ENCODE measurements at regions of chr3 and their contacts with region 1.

Region 1: DNA sequence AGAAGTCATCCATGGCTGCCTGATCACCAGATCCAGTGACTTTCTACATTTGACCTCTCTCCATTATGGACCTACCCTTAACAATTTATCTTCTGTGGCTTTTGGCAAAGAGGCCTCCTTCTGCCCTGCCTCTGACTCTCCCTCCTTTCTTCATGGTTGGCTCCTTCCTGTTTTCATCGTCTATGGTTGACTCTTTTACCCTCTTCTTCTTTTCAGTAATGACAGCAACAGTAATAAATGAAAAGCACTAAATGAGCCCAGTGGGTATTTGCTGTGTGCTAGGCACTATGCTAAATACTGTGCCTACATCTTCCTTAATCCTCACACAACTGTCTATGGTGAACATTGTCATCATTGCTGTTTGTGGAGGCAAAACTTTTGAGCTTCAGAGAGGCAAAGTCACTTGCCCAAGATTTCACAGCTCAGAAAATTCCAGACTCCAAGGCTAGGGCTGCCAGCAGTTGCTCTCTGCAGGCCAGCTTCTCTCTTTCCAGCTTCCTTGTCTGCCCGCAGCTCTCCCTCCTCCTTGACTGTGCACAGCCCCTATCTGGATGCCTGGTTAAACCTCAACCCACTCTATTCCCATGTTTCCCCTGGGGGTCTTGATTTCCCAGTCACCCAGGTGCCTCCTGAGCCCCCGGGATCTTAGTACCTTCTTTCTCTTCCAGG is 24.6 kb downstream of the ITPR1 start:
- DNase-seq: no peak
- ATAC-seq: no peak
- H3K4me3 Mint-ChIP-seq: no peak overlapping the region
- H3K27ac Mint-ChIP-seq: peak overlapping the region; percentile 84
- H3K4me1 Mint-ChIP-seq: peaks cover 29% of the 10 kb centered on the region
- H3K27me3 Mint-ChIP-seq: no peaks in the 10 kb centered on the region

Region 2: DNA sequence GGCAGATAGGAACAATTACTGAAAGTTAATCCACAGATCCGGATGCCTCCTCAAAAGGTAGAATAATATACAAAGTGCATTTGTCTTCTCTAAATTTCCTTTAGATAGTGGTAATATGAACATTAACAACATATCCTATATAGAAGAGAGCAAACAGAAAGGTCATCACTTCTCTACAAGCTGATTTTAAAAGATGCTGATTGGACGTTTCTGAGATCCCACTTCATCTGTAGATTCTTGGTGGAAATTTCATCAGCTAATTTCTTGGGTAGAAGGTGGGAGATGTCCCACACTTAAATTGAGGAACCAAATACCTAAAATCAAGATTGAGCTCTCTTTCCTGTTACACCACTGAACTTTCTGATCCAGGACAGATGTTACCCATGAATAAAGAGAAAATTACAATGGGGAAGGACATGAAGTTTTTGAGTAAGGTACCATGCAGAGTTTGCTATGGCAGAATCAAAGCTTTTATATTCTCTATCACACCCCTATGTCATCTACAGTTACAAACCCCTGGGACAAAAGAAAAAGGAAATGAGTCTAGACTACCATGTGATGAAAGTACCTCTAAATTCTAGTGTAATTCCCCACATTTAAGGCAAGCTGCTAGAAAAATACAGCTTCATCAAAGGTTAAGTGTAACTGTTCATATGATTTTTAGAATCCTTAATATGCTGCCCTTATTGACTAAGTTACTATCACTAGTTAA is 403.8 kb before region 1 on chr3:
- CTCF ChIA-PET with region 1: no interaction called
- POLR2A ChIA-PET with region 1: no interaction called
- DNase-seq: no peak
- ATAC-seq: no peak
- H3K4me3 Mint-ChIP-seq: no peak overlapping the region
- H3K27ac Mint-ChIP-seq: no peak overlapping the region
- H3K4me1 Mint-ChIP-seq: no peaks in the 10 kb centered on the region
- H3K27me3 Mint-ChIP-seq: no peaks in the 10 kb centered on the region

Region 3: DNA sequence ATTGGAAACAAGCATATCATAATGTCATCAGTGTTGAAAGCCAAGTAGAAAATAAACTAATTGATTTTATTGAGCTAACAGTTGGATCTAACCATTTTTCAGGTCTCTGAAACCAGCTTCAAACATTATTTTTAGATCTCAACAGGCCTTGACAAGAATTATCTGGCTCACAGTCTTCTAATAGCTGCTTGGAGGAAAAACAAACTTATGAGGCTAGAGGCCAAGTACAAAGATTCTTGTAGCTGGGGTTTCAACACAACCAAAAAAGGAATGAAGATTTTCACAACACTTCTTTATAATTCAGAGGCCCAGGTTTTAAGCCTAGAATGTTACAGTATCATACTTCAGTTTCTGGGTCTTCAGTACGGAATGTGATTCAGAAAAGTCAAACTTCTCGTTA is 210.9 kb before region 1 on chr3:
- CTCF ChIA-PET with region 1: no interaction called
- POLR2A ChIA-PET with region 1: no interaction called
- DNase-seq: no peak
- ATAC-seq: no peak
- H3K4me3 Mint-ChIP-seq: no peak overlapping the region
- H3K27ac Mint-ChIP-seq: no peak overlapping the region
- H3K4me1 Mint-ChIP-seq: peaks cover 17% of the 10 kb centered on the region
- H3K27me3 Mint-ChIP-seq: no peaks in the 10 kb centered on the region

Region 4: DNA sequence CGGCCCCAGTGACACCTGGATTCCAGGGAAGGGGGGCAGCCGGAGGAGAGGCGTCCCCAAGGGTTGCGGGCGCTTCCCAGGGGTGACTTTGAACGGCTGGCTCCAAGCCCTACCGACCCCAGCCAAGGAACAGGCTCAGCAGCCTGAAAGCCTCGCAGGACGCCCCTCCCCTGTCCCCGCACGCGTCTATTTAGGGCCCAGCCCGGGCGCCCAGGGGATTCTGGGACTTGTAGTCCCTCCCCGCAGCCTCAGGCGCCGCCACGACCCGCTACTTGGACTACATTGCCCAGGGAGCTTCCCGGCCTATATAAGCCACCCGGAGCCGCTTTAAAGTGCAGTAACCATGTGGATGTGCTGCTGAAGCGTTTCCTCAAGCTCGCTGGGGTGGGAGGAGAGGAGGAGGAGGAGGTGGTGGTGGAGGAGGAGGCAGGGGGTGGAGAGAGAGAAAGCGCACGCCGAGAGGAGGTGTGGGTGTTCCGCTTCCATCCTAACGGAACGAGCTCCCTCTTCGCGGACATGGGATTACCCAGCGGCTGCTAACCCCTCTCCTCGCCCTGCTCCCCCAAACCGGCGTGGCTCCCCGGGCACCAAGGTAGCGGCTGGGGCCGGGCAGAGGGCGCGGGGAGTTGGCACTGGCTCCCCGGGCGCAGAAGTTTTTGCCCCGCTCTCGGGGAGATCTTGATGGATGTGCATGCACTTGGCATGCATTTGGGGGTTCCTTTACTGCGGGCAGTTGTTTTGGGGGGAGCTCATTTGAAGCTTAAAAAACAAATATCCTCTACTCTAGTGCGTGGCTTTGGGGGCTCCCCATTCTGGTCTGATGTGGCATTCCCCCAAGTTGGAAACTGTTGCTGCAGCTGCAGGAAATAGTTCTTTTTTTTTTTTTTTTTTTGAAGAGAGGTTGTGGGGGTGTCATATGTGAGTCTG is 24.5 kb before region 1 on chr3 and contains the start of gene ITPR1:
- CTCF ChIA-PET with region 1: interaction called, 56 read pairs
- POLR2A ChIA-PET with region 1: interaction called, 32 read pairs
- DNase-seq: peak; percentile 99
- ATAC-seq: peak; percentile 91
- H3K4me3 Mint-ChIP-seq: peak within 1 kb of the TSS; percentile 94
- H3K27ac Mint-ChIP-seq: peak within 1 kb of the TSS; percentile 89
- H3K4me1 Mint-ChIP-seq: peaks cover 39% of the 10 kb centered on the region
- H3K27me3 Mint-ChIP-seq: peaks cover 20% of the 10 kb centered on the region
- total RNA-seq, gene ITPR1: 53.8 to 57.3 TPM

Region 5: GRCh38 chr3:4504340-4505261 is 13.2 kb before region 1 on chr3:
- CTCF ChIA-PET with region 1: interaction called, 51 read pairs
- POLR2A ChIA-PET with region 1: interaction called, 8 read pairs
- DNase-seq: peak; percentile 50
- ATAC-seq: peak; percentile 83
- H3K4me3 Mint-ChIP-seq: peak overlapping the region; percentile 80
- H3K27ac Mint-ChIP-seq: peak overlapping the region; percentile 98
- H3K4me1 Mint-ChIP-seq: peaks cover 58% of the 10 kb centered on the region
- H3K27me3 Mint-ChIP-seq: no peaks in the 10 kb centered on the region

Region 6: DNA sequence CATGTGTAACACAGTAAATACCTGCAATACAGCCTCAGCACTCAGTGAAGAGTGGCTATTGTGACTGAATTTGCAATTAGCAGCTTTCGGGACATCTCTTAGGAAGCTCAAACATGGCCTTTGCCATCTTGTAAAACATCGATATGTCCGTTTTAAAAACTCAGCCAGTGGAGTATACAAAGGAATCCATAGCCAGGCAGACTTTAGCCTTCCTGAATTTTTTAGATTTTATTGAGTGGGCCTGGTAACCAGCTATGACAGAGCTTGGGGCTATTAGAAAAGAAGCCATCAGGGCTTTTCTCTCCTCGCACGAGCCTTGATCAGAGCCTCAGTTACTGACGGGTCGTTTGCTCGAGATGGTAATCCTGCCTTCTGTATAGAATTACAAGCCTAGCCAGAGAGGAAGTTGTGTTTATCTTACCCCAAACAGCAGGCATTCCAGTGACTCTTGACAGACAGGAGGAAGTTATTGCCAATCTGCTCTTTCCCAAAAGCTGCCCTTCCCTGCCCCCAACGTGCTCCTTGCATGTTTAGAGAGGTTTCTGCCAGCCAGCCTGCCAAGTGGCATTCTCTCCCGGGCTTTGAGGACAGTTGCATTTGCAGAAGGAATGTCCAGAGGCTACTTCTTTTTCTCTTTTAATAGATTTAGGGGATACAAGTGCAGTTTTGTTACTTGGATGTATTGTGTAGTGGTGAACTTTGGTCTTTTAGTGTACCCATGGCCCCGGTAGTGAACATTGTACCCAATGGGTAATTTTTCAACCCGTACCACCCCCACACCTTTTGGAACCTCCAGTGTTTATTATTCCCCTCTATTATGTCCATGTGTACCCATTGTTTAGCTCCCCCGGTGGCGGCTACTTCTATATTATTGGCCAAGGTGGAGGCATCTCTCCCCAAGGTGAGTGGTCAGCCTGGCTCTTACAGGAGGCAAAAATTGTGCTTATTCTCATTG is 16.0 kb after region 1 on chr3:
- CTCF ChIA-PET with region 1: interaction called, 13 read pairs
- POLR2A ChIA-PET with region 1: no interaction called
- DNase-seq: no peak
- ATAC-seq: no peak
- H3K4me3 Mint-ChIP-seq: no peak overlapping the region
- H3K27ac Mint-ChIP-seq: no peak overlapping the region
- H3K4me1 Mint-ChIP-seq: no peaks in the 10 kb centered on the region
- H3K27me3 Mint-ChIP-seq: no peaks in the 10 kb centered on the region

Region 7: GRCh38 chr3:4571690-4572334 is 54.0 kb after region 1 on chr3:
- CTCF ChIA-PET with region 1: interaction called, 14 read pairs
- POLR2A ChIA-PET with region 1: no interaction called
- DNase-seq: no peak
- ATAC-seq: peak; percentile 53
- H3K4me3 Mint-ChIP-seq: no peak overlapping the region
- H3K27ac Mint-ChIP-seq: no peak overlapping the region
- H3K4me1 Mint-ChIP-seq: peaks cover 5% of the 10 kb centered on the region
- H3K27me3 Mint-ChIP-seq: no peaks in the 10 kb centered on the region

Region 8: DNA sequence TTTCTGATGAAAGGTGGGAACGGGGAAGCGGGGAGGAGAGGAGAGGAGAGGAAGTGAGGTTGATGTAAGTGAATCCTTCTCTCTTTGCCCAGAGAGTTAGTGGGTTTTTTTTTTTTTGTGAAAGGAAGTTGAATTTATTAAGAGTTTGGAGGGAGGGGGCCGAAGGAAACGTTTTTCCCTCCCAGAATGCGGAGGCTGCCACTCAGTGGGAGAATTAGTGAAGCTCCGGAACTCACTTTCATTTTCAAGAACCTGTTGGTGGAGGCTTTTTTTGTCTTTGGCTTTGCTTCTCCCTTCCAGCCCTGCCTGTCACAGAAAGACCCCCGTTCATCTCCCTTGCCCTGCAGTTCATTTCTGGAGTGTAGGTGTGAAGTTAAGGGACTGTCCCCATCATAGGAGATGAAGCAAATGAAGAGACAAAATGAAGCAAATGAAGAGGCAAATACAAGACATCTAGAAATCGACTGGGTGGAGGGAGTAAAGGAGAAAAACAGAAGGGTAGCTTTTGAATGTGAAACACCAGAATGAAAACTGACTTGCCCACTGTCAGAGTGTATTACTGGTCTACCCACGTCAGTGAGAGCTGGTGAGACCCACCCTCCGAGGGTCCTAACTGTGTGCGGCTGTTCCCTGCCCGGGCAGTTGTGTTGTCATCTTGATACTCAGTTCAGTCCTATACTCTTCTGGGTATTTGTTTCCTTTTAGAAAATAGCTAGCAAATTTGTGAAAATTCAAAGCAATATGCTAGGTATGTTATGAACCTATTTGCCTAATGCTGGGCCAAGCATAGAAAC is 66.9 kb after region 1 on chr3:
- CTCF ChIA-PET with region 1: interaction called, 18 read pairs
- POLR2A ChIA-PET with region 1: no interaction called
- DNase-seq: peak; percentile 40
- ATAC-seq: peak; percentile 59
- H3K4me3 Mint-ChIP-seq: peak overlapping the region; percentile 77
- H3K27ac Mint-ChIP-seq: peak overlapping the region; percentile 79
- H3K4me1 Mint-ChIP-seq: peaks cover 50% of the 10 kb centered on the region
- H3K27me3 Mint-ChIP-seq: no peaks in the 10 kb centered on the region

Region 9: DNA sequence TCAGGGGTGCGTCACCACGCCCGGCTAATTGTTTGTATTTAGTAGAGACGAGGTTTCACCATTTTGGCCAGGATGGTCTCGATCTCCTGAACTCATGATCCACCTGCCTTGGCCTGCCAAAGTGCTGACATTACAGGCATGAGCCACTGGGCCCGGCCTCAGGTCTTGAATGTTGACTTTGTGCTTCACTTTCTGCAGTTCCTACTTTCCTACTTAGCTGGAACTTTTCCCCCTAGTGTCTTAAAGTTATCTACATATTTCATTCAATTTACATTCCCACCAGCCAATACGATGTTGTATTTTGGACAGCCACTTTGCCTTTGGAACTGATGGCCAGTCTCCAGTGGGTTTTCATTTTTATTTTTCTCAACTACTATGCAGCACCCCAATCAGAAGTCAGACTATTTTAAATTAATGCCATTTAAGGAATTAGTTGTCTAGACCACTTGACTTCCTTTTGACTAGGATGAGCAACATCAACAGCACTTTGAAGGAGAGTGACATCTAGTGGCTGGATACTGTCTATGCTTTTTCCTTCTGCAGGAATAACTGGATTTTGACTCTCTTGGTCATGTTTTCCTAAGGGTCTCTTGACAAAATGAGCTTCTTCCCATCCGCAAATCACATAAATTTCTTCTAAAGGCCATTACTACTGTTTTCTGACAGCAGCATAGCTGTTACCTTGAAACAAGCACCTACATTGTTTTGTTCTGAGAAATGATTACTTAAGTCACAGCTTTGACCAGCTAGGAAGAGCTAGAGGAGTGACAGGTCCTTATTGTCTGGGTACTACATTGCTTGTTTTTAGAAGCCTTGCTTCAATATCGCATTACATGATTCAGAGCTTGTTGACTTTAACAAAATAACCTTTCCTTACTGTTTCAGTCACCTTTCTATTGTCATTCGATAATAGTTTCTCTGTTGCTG is 115.6 kb after region 1 on chr3:
- CTCF ChIA-PET with region 1: interaction called, 80 read pairs
- POLR2A ChIA-PET with region 1: no interaction called
- DNase-seq: no peak
- ATAC-seq: peak; percentile 68
- H3K4me3 Mint-ChIP-seq: no peak overlapping the region
- H3K27ac Mint-ChIP-seq: peak overlapping the region; percentile 47
- H3K4me1 Mint-ChIP-seq: peaks cover 9% of the 10 kb centered on the region
- H3K27me3 Mint-ChIP-seq: no peaks in the 10 kb centered on the region